Ovary (tissue), 10 donors: ENCODE measurements at regions of chr9 and their contacts with region 1.

Region 1: DNA sequence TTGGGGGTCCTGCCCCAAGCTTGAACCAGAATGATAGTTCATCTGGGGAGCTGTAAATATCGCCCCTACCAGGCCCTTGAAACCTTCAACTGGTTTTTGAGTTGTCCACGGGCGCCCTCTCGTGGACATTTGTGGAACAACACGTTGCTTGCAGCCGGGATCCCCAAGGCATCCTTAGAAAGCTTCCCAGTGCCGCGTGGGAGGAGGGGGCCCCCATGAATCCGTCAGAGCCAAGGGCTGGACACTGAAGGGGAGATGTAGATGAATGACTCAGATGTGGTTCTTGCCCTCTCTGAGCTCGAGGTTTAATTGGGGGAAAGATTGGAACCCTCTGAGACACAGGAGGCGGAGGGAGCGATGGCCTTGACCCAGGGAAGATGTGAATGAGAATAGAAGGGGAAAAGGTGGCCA is 31.8 kb upstream of the ORM1 start:
- DNase-seq: peak; percentile 63 to 88 (median 83)
- H3K4me3 ChIP-seq: no peak overlapping the region
- H3K27ac ChIP-seq: no peak overlapping the region
- H3K4me1 ChIP-seq: no peaks in the 10 kb centered on the region
- H3K27me3 ChIP-seq: no peaks in the 10 kb centered on the region
- CTCF ChIP-seq: peak; percentile 85 to 94 (median 92)
- EP300 ChIP-seq: no peak
- POLR2A ChIP-seq: no peak

Region 2: GRCh38 chr9:113876151-113876992 is 414.7 kb before region 1 on chr9 and contains the start of gene ZNF618:
- intact Hi-C with region 1: loop called in 1 of 4 experiments (anchors 5 kb)
- DNase-seq: peak in 4 of 5 donors; percentile 23 to 64 (median 58)
- H3K4me3 ChIP-seq: peak within 1 kb of the TSS; percentile 96
- H3K27ac ChIP-seq: peak within 1 kb of the TSS; percentile 69 to 90
- H3K4me1 ChIP-seq: peaks cover 10% of the 10 kb centered on the region
- H3K27me3 ChIP-seq: no peaks in the 10 kb centered on the region
- CTCF ChIP-seq: peak in 2 of 3 donors; percentile 12 to 21
- EP300 ChIP-seq: no peak
- POLR2A ChIP-seq: no peak
- total RNA-seq, gene ZNF618: 8.2 to 28.9 (median 22.0) TPM

Region 3: GRCh38 chr9:114082017-114082762 is 208.9 kb before region 1 on chr9:
- intact Hi-C with region 1: loop called (anchors 2 to 5 kb)
- DNase-seq: peak; percentile 86 to 93 (median 90)
- H3K4me3 ChIP-seq: no peak overlapping the region
- H3K27ac ChIP-seq: no peak overlapping the region
- H3K4me1 ChIP-seq: no peaks in the 10 kb centered on the region
- H3K27me3 ChIP-seq: no peaks in the 10 kb centered on the region
- CTCF ChIP-seq: peak; percentile 83 to 87 (median 84)
- EP300 ChIP-seq: no peak
- POLR2A ChIP-seq: no peak

Region 4: GRCh38 chr9:114108016-114108833 is 182.8 kb before region 1 on chr9:
- intact Hi-C with region 1: loop called in 2 of 4 experiments (anchors 1 to 5 kb)
- DNase-seq: peak; percentile 55 to 87 (median 73)
- H3K4me3 ChIP-seq: no peak overlapping the region
- H3K27ac ChIP-seq: no peak overlapping the region
- H3K4me1 ChIP-seq: no peaks in the 10 kb centered on the region
- H3K27me3 ChIP-seq: no peaks in the 10 kb centered on the region
- CTCF ChIP-seq: peak; percentile 43 to 62 (median 54)
- EP300 ChIP-seq: no peak
- POLR2A ChIP-seq: no peak

Region 5: DNA sequence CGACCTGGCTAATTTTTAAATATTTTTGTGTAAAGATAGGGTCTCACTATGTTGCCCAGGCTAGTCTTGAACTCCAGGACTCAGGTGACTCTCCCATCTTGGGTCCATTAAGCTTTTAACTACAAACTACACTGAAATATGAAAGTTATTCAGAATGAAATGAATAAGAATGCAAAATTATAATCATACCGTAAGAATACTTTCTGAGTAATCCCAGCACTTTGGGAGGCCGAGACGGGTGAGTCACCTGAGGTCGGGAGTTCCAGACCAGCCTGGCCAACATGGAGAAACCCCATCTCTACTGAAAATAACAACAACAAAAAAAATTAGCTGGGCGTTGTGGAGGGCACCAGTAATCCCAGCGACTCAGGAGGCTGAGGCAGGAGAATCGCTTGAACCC is 30.7 kb after region 1 on chr9:
- intact Hi-C with region 1: no loop called
- DNase-seq: no peak
- H3K4me3 ChIP-seq: no peak overlapping the region
- H3K27ac ChIP-seq: no peak overlapping the region
- H3K4me1 ChIP-seq: peaks cover 2% of the 10 kb centered on the region
- H3K27me3 ChIP-seq: no peaks in the 10 kb centered on the region
- CTCF ChIP-seq: no peak
- EP300 ChIP-seq: no peak
- POLR2A ChIP-seq: no peak